Uterus (tissue), 4 donors: ENCODE measurements at regions of chr2 and their contacts with region 1.

Region 1: GRCh38 chr2:171522052-171522787 is at the start of gene CYBRD1:
- DNase-seq: peak; percentile 85 to 90
- H3K4me3 ChIP-seq: peak within 1 kb of the TSS; percentile 67 to 79
- H3K27ac ChIP-seq: peak within 1 kb of the TSS; percentile 94
- H3K4me1 ChIP-seq: peaks cover 0 to 7% of the 10 kb centered on the region in 2 donors
- H3K27me3 ChIP-seq: no peaks in the 10 kb centered on the region
- CTCF ChIP-seq: peak in 1 of 4 experiments; percentile 8
- POLR2A ChIP-seq: peak; percentile 68 to 77
- total RNA-seq, gene CYBRD1: 108 to 335 (median 219) TPM

Region 2: GRCh38 chr2:171247741-171248662 is 274.2 kb before region 1 on chr2:
- intact Hi-C with region 1: no loop called
- DNase-seq: no peak
- H3K4me3 ChIP-seq: no peak overlapping the region
- H3K27ac ChIP-seq: no peak overlapping the region
- H3K4me1 ChIP-seq: no peaks in the 10 kb centered on the region
- H3K27me3 ChIP-seq: no peaks in the 10 kb centered on the region
- CTCF ChIP-seq: no peak
- POLR2A ChIP-seq: no peak

Region 3: GRCh38 chr2:171433763-171434670 is 88.2 kb before region 1 on chr2 and contains the starts of genes DCAF17 and METTL8:
- intact Hi-C with region 1: loop called (anchors 10 kb)
- DNase-seq: peak; percentile 94 to 95
- H3K4me3 ChIP-seq: peak within 1 kb of the TSS; percentile 48 to 78
- H3K27ac ChIP-seq: peak within 1 kb of the TSS; percentile 88 to 96
- H3K4me1 ChIP-seq: no peaks in the 10 kb centered on the region
- H3K27me3 ChIP-seq: no peaks in the 10 kb centered on the region
- CTCF ChIP-seq: peak; percentile 22 to 44 (median 32)
- POLR2A ChIP-seq: peak; percentile 60 to 76
- total RNA-seq, gene DCAF17: 14.6 to 50.8 (median 23.8) TPM
- total RNA-seq, gene METTL8: 6.9 to 33.0 (median 17.7) TPM

Region 4: DNA sequence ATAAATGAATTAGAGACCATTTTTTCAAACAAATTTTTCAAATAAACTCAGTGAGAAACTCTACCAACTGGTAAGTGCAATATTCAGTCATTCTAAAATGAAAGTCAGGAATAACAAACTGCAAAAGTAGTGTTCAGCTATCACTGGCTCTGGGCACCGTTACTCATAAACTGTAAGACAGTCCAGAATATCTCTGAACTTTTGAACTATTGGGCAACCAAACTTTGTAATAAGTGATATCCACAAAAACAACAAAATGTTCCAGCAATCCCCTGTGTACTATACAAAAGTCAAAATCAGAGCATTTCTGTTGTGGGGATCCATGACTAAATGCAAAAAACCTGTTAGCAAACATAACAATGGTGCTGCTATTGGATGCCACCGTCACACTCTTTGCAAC is 315.5 kb after region 1 on chr2:
- intact Hi-C with region 1: no loop called
- DNase-seq: no peak
- H3K4me3 ChIP-seq: no peak overlapping the region
- H3K27ac ChIP-seq: no peak overlapping the region
- H3K4me1 ChIP-seq: no peaks in the 10 kb centered on the region
- H3K27me3 ChIP-seq: no peaks in the 10 kb centered on the region
- CTCF ChIP-seq: no peak
- POLR2A ChIP-seq: no peak